ENCODE measurements at regions of chr6 and their contacts with region 1.

Region 1: GRCh38 chr6:43758617-43759050 is 11.4 kb upstream of the VEGFA start:
- DNase-seq: peak in 1 of 2 experiments; percentile 27
- ATAC-seq: peak; percentile 57 to 85; a peak in 4 of 6 replicates
- H3K4me3 ChIP-seq: no peak overlapping the region
- H3K27ac ChIP-seq: 0 out of 6 replicates have a peak overlapping the region, but pooled peaks of 1 of the 2 experiments have one; percentile 27
- H3K4me1 ChIP-seq: no peaks in the 10 kb centered on the region
- CTCF ChIP-seq: peak; percentile 52
- EP300 ChIP-seq: no peak
- POLR2A ChIP-seq: no peak
- RAD21 ChIP-seq: peak; percentile 53 to 60

Region 2: GRCh38 chr6:43702534-43703440 is 55.8 kb before region 1 on chr6:
- CTCF ChIA-PET with region 1: no interaction called
- POLR2A ChIA-PET with region 1: no interaction called
- DNase-seq: peak; percentile 84 to 92
- ATAC-seq: peak; percentile 81 to 86
- H3K4me3 ChIP-seq: no peak overlapping the region
- H3K27ac ChIP-seq: peak overlapping the region; percentile 75 to 87
- H3K4me1 ChIP-seq: peaks cover 85% of the 10 kb centered on the region
- CTCF ChIP-seq: no peak
- EP300 ChIP-seq: no peak
- POLR2A ChIP-seq: no peak; the same call in 1 of the 2 replicates
- RAD21 ChIP-seq: no peak

Region 3: DNA sequence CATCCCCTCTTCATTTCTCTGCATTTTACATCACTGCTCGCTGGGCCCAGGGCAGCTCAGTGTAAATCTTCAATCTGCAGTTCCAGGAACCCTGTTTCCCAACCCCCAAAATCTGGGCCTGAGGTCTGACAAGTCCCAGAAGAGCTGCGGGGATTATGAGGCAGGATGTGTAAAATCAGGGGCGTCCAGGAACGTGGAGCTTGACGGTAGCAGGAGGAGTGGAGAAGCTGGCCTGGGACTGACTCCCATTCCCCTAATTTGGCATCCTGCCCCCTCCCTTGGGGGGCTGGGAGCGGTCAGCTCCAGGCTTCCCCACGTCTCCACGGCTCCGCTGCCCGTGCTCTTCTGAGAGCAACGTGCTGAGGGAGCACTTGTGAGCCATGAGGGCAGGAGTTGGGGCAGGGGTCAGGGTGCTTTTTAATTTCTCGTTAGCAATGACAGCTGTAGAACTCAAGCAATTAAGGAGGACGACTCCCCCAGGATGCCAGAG is 12.0 kb before region 1 on chr6:
- CTCF ChIA-PET with region 1: interaction called, 33 read pairs
- POLR2A ChIA-PET with region 1: no interaction called
- DNase-seq: no peak
- ATAC-seq: no peak
- H3K4me3 ChIP-seq: no peak overlapping the region
- H3K27ac ChIP-seq: no peak overlapping the region; a peak in 1 of 6 replicates
- H3K4me1 ChIP-seq: peaks cover 9% of the 10 kb centered on the region; the same call in 2 of the 3 replicates
- CTCF ChIP-seq: no peak
- EP300 ChIP-seq: no peak
- POLR2A ChIP-seq: no peak
- RAD21 ChIP-seq: no peak